Endothelial cell of umbilical vein (primary cell): ENCODE measurements at regions of chr16 and their contacts with region 1.

Region 1: DNA sequence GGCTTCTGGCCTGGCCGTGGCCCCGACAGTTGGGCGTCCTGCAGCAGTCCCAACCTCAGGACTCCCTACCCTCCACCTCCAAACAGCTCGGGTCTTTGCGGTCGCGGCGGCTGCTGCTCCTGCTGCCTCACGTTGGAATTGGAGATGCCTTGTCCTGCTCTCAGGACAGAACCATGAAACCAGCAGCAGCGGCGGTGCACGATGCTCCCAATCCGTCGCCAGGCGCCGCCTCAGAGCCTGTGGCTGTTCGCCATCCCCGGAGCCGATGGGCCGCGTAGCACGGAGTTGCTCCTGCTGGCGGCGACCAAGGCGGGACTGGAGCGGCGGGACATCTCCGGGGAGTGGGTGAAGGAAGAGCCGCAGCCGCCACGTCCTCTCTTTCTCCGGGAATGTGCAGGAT is 1965.9 kb downstream of the TP53TG3F start:
- DNase-seq: no peak
- H3K4me3 ChIP-seq: no peak overlapping the region
- H3K27ac ChIP-seq: no peak overlapping the region
- H3K4me1 ChIP-seq: no peaks in the 10 kb centered on the region
- H3K27me3 ChIP-seq: no peaks in the 10 kb centered on the region
- CTCF ChIP-seq: no peak
- POLR2A ChIP-seq: no peak

Region 2: DNA sequence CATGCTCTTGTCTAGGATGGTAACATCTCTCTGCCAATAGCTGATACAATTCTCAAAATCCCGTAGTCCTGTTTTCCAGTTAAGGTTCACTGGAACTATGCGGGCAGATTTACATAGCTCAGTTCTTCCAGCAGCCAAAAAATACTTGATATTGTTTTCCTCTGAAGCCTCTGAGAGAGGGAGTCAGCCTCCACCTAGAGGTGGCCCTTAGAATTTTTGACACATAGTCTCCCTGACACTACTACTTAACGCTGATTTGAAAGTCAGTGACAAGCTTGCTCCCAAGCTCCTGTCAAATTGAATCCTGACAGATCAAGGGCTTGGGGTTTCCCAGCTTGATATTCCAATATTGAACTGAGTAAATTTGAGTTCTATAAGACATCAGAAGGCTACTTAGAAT is 185.7 kb before region 1 on chr16:
- CTCF ChIA-PET with region 1: no interaction called
- POLR2A ChIA-PET with region 1: no interaction called
- dilution Hi-C with region 1: no loop called
- intact Hi-C with region 1: no loop called
- DNase-seq: no peak
- H3K4me3 ChIP-seq: no peak overlapping the region
- H3K27ac ChIP-seq: no peak overlapping the region
- H3K4me1 ChIP-seq: no peaks in the 10 kb centered on the region
- H3K27me3 ChIP-seq: no peaks in the 10 kb centered on the region
- CTCF ChIP-seq: no peak
- POLR2A ChIP-seq: no peak

Region 3: GRCh38 chr16:35409503-35409902 is 15.8 kb before region 1 on chr16:
- CTCF ChIA-PET with region 1: no interaction called
- POLR2A ChIA-PET with region 1: no interaction called
- dilution Hi-C with region 1: no loop called
- intact Hi-C with region 1: no loop called
- DNase-seq: no peak
- H3K4me3 ChIP-seq: no peak overlapping the region
- H3K27ac ChIP-seq: no peak overlapping the region
- H3K4me1 ChIP-seq: no peaks in the 10 kb centered on the region
- H3K27me3 ChIP-seq: no peaks in the 10 kb centered on the region
- CTCF ChIP-seq: no peak
- POLR2A ChIP-seq: no peak

Region 4: DNA sequence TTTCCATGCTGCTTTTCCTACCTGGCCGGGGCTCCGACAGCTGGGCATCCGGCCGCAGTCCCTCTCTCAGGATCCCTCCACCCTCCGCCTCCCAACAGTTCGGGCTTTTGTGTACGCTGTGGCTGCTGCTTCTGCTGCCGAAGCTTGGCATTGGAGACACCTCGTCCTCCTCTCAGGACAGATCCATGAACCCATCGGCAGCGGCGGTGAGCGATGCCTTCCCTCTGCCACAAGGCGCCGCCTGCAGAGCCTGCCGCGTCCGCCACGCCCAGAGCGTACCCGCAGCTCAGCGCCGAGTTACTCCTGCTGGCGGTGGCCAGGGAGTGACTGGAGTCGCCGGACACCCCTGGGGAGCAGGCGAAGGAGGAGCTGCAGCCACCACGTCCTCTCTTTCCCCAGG is 67.0 kb after region 1 on chr16:
- CTCF ChIA-PET with region 1: no interaction called
- POLR2A ChIA-PET with region 1: no interaction called
- dilution Hi-C with region 1: no loop called
- intact Hi-C with region 1: loop called (anchors 10 kb)
- DNase-seq: no peak
- H3K4me3 ChIP-seq: no peak overlapping the region
- H3K27ac ChIP-seq: no peak overlapping the region
- H3K4me1 ChIP-seq: no peaks in the 10 kb centered on the region
- H3K27me3 ChIP-seq: no peaks in the 10 kb centered on the region
- CTCF ChIP-seq: no peak
- POLR2A ChIP-seq: no peak